Activated CD8-positive, alpha-beta T cell treated with anti-CD3 and anti-CD28 coated beads, Interleukin-2, amount 10 ng/mL, durations not matched to agents 7 days and 5 days (primary cell): ENCODE measurements at regions of chr2 and their contacts with region 1.

Region 1: GRCh38 chr2:30165050-30165520 is 18.3 kb downstream of the YPEL5 start:
- DNase-seq: peak; percentile 84
- ATAC-seq: peak; percentile 79
- H3K4me3 Mint-ChIP-seq: no peak overlapping the region
- H3K27ac Mint-ChIP-seq: no peak overlapping the region
- H3K4me1 Mint-ChIP-seq: peaks cover 17% of the 10 kb centered on the region
- H3K27me3 Mint-ChIP-seq: peaks cover 3% of the 10 kb centered on the region

Region 2: DNA sequence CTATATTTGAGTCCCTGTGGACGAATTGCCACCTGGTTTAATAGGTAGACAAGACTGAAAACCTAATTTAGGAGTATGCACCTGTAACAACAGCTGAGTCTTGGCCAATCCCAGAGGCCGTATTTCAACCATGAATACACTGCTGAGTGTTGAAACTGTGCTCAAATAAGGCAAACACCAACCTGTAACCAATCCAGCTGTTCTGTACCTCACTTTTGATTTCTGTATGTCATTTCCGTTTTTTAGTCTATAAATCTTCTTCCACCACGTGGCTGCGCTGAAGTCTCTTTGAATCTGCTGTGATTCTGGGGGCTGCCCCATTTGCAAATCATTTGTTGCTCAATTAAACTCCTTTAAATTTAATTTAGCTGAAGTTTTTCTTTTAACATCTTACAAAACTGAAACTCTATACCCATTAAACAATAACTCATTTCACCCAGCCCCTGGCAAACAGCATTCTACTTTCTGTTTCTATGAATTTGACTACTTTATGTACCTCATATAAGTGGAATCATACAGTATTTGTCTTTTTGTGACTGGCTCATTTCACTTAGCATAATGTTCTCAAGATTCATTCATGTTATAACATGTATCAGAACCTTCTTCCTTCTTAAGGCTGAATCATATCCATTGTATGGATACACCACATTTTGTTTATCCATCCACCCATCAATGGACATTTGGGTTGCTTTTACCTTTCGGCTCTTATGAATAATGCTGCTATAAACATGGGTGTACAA is 25.8 kb before region 1 on chr2:
- CTCF ChIA-PET with region 1: interaction called, 174 read pairs
- POLR2A ChIA-PET with region 1: no interaction called
- DNase-seq: peak; percentile 33
- ATAC-seq: peak; percentile 48
- H3K4me3 Mint-ChIP-seq: no peak overlapping the region
- H3K27ac Mint-ChIP-seq: peak overlapping the region; percentile 6
- H3K4me1 Mint-ChIP-seq: peaks cover 12% of the 10 kb centered on the region
- H3K27me3 Mint-ChIP-seq: peaks cover 5% of the 10 kb centered on the region

Region 3: DNA sequence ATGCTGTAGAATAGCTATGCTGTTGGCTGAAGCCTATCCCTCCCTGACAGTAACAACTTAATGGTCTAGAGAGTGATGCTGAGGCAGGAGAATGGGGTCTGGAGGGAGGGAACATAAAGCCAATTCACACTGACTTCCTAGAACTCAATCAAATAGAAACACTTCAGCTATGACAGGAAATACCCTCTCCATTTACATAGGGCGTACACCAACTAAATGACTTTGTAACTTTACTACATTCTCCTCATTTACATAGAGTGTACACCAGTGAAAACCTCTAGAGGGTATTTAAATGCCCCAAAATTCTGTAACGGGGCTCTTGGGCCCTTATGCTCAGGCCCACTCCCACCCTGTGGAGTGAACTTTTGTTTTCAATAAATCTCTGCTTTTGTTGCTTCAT is 23.2 kb after region 1 on chr2:
- CTCF ChIA-PET with region 1: interaction called, 12 read pairs
- POLR2A ChIA-PET with region 1: interaction called, 3 read pairs
- DNase-seq: no peak
- ATAC-seq: no peak
- H3K4me3 Mint-ChIP-seq: no peak overlapping the region
- H3K27ac Mint-ChIP-seq: no peak overlapping the region
- H3K4me1 Mint-ChIP-seq: peaks cover 2% of the 10 kb centered on the region
- H3K27me3 Mint-ChIP-seq: peaks cover 4% of the 10 kb centered on the region

Region 4: GRCh38 chr2:30231212-30231995 is 66.3 kb after region 1 on chr2 and contains the start of gene LBH:
- CTCF ChIA-PET with region 1: interaction called, 128 read pairs
- POLR2A ChIA-PET with region 1: interaction called, 10 read pairs
- DNase-seq: peak; percentile 89
- ATAC-seq: peak; percentile 52
- H3K4me3 Mint-ChIP-seq: peak within 1 kb of the TSS; percentile 73
- H3K27ac Mint-ChIP-seq: peak within 1 kb of the TSS; percentile 93
- H3K4me1 Mint-ChIP-seq: peaks cover 64% of the 10 kb centered on the region
- H3K27me3 Mint-ChIP-seq: peaks cover 5% of the 10 kb centered on the region
- total RNA-seq, gene LBH: 97.0 to 100 TPM

Region 5: DNA sequence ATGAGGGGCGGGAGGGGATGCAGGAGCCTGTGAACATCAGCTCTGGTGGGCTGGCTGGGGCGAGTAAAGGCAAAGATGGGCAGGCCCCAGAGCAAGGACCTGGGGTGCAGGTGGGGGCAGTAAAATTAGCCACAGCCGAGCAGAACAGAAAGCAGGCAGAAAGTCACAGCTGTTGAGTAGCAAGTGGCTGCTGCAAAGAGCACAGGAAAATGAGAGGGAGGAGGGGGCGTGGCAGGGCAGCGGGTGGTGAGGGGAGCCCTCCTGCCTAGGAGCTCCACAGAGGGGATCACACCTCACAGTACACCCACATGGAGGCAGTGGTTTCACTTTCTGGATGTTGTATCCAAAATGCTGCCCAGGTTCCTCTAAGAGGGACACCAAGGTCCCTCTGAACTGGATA is 145.9 kb after region 1 on chr2:
- CTCF ChIA-PET with region 1: no interaction called
- POLR2A ChIA-PET with region 1: no interaction called
- DNase-seq: no peak
- ATAC-seq: peak; percentile 30
- H3K4me3 Mint-ChIP-seq: no peak overlapping the region
- H3K27ac Mint-ChIP-seq: peak overlapping the region; percentile 73
- H3K4me1 Mint-ChIP-seq: peaks cover 40% of the 10 kb centered on the region
- H3K27me3 Mint-ChIP-seq: no peaks in the 10 kb centered on the region

Region 6: GRCh38 chr2:30475542-30475941 is 310.5 kb after region 1 on chr2:
- CTCF ChIA-PET with region 1: interaction called, 33 read pairs
- POLR2A ChIA-PET with region 1: no interaction called
- DNase-seq: no peak
- ATAC-seq: no peak
- H3K4me3 Mint-ChIP-seq: no peak overlapping the region
- H3K27ac Mint-ChIP-seq: no peak overlapping the region
- H3K4me1 Mint-ChIP-seq: no peaks in the 10 kb centered on the region
- H3K27me3 Mint-ChIP-seq: no peaks in the 10 kb centered on the region

Region 7: DNA sequence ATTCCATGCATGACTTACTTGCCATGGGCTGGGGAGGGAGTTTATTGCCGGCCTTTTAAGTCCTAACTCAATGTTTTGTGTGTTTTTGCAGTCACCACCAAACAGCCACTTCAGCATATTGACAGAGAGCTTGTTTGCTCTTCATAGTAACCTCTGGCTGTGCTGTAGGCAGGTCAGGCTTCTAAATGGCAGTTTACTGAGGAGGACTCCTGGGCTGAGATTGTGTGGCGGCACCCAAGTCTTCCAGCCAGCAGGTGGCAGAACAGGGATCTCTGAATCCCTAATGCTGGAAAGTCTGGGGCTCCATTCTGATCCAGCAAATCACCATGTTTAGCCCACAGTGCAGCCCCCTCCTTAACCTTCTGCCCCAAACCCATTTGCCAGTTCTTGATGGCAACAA is 520.9 kb after region 1 on chr2:
- CTCF ChIA-PET with region 1: interaction called, 12 read pairs
- POLR2A ChIA-PET with region 1: no interaction called
- DNase-seq: peak; percentile 21
- ATAC-seq: no peak
- H3K4me3 Mint-ChIP-seq: no peak overlapping the region
- H3K27ac Mint-ChIP-seq: no peak overlapping the region
- H3K4me1 Mint-ChIP-seq: no peaks in the 10 kb centered on the region
- H3K27me3 Mint-ChIP-seq: no peaks in the 10 kb centered on the region